Right ventricle myocardium inferior (tissue), 1 donor: ENCODE measurements at regions of chr10 and their contacts with region 1.

Region 1: GRCh38 chr10:17062955-17063484 is 66.6 kb downstream of the CUBN start:
- DNase-seq: no peak
- ATAC-seq: peak; percentile 31

Region 2: DNA sequence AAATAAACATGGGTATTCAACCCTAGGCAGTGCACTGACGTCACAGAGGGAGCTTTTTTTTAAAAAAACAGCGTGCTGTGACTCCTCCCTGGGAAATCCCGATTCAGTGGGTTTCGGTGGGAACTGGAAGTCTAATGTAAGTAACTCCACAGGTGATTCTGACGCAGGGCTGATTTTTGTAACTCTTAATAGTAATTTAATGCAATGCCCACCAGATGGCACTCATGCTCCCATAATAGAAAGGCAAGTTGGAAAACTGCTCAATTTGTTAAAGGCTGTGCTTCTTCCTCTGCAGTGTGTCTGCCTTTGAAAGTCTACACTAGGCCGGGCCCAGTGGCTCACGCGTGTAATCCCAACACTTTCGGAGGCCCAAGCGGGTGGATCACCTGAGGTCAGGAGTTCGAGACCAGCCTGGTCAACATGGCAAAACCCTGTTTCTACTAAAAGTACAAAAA is 234.9 kb before region 1 on chr10:
- intact Hi-C with region 1: no loop called
- DNase-seq: peak; percentile 68
- ATAC-seq: peak; percentile 88

Region 3: DNA sequence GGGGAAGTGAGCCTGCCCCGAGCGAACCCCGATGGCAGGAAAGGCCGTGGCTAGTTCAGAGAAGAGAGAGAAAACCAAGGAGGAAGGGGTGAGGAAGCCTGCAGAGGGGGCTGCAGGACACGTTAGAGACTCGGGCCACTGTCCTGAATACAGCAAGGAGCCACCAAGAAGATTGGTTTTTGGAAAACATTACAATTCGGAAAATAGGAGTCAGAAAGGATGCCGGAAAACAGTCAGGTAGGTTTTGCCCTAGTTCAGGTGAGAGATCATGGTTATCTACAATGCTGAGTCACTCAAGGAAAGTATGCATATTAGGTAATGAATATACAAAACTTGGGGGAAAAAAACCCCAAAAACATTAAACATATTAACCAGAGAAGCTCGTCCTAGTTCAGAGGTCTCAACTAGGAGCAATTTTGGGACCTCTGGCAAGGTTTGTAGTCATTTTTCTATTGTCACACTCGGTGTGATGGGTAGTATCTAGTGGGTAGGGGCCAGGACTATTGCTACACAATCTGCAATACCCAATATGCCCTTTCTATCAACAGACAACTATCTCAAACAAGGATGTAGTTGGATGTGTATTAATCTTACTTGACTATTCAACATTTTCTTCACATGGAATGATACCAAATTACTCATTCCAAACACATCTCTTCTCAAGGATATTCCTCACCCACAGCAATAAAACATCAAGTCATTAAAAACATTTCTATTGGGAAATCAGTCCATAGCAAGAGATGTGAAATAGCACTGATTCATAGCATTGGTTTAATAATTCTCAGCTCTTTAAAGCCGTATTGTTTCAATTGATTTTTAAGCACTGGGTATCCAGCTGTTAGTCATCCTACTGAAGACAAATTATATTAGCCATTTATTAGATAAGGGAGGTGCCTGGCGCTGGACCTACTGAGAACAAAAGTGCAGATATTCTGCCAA is 171.4 kb before region 1 on chr10:
- intact Hi-C with region 1: loop called (anchors 10 kb)
- DNase-seq: peak; percentile 78
- ATAC-seq: peak; percentile 96

Region 4: GRCh38 chr10:16965740-16966447 is 97.1 kb before region 1 on chr10:
- intact Hi-C with region 1: no loop called
- DNase-seq: no peak
- ATAC-seq: peak; percentile 57